PC-3 (cell line): ENCODE measurements at regions of chr1 and their contacts with region 1.

Region 1: GRCh38 chr1:155984341-155984740 is 6.0 kb upstream of the ARHGEF2 start:
- DNase-seq: no peak
- ATAC-seq: no peak
- H3K4me3 ChIP-seq: no peak overlapping the region
- H3K27ac ChIP-seq: no peak overlapping the region
- H3K4me1 ChIP-seq: peaks cover 22% of the 10 kb centered on the region
- H3K27me3 ChIP-seq: no peaks in the 10 kb centered on the region
- CTCF ChIP-seq: no peak

Region 2: DNA sequence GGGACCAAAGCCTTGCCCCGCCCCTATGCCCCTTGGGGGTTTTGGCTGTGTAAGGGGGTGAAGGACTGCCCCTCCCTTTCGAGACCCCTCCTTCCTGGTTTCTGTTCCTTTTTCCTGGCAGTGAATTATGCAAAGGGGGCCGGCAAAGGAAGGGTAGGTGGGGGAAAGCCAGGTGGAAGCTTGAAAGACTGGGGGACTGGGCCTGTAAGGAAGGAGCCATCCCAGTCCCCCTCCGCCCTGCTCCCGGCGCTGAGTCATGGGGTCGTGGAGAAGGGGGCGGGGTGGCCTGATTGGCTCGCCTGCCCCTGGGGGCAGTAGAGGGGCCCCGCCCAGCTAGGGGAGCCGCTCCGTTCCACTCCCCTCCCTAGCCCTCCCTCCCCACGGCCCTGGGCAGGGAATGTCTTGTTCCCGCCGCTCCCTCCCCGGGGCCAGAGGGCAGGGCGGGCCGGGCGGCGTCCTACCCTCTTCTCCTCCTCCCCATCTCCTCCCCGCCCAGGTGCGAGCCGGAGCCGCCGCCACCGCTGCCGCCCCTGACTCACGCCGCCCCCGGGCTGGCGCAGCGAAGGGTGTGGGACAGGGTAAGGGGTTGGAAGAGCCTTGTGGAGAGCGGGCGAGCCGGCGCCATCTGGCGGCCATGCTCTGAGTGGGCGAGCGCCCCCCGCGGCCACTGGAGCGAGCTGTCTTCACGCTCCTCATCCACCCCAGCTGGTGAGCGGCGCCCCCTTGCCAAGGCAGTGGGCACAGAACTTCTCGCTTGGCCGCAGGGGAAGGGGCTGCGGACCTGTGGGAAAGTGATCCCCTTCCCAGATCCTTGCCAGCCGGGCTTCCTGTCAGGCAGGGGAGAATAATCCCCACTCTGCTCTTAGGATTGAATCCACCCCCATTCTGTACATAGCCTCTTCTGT is 967.0 kb before region 1 on chr1:
- CTCF ChIA-PET with region 1: no interaction called
- POLR2A ChIA-PET with region 1: no interaction called
- intact Hi-C with region 1: no loop called
- DNase-seq: peak; percentile 99
- ATAC-seq: peak; percentile 89
- H3K4me3 ChIP-seq: peak overlapping the region; percentile 42
- H3K27ac ChIP-seq: peak overlapping the region; percentile 87
- H3K4me1 ChIP-seq: peaks cover 21% of the 10 kb centered on the region
- H3K27me3 ChIP-seq: no peaks in the 10 kb centered on the region
- CTCF ChIP-seq: peak; percentile 100

Region 3: GRCh38 chr1:155038602-155039307 is 945.6 kb before region 1 on chr1:
- CTCF ChIA-PET with region 1: no interaction called
- POLR2A ChIA-PET with region 1: interaction called, 30 read pairs
- intact Hi-C with region 1: no loop called
- DNase-seq: peak; percentile 89
- ATAC-seq: peak; percentile 98
- H3K4me3 ChIP-seq: peak overlapping the region; percentile 1; the same call in 1 of the 2 replicates
- H3K27ac ChIP-seq: peak overlapping the region; percentile 44
- H3K4me1 ChIP-seq: peaks cover 18% of the 10 kb centered on the region
- H3K27me3 ChIP-seq: no peaks in the 10 kb centered on the region
- CTCF ChIP-seq: no peak

Region 4: GRCh38 chr1:156020292-156021089 is 36.1 kb after region 1 on chr1 and contains the start of gene SSR2:
- CTCF ChIA-PET with region 1: no interaction called
- POLR2A ChIA-PET with region 1: no interaction called
- intact Hi-C with region 1: no loop called
- DNase-seq: peak; percentile 98
- ATAC-seq: peak; percentile 98
- H3K4me3 ChIP-seq: peak within 1 kb of the TSS; percentile 75
- H3K27ac ChIP-seq: no peak within 1 kb of the TSS
- H3K4me1 ChIP-seq: peaks cover 6% of the 10 kb centered on the region; the same call in 1 of the 2 replicates
- H3K27me3 ChIP-seq: no peaks in the 10 kb centered on the region
- CTCF ChIP-seq: no peak
- total RNA-seq, gene SSR2: 282 and 293 TPM in 2 replicates